ENCODE measurements at regions of chr6 and their contacts with region 1.

Region 1: GRCh38 chr6:116100419-116101301 is at the start of gene NT5DC1:
- DNase-seq: peak; percentile 83
- H3K4me3 Mint-ChIP-seq: peak within 1 kb of the TSS; percentile 89
- H3K27ac Mint-ChIP-seq: peak within 1 kb of the TSS; percentile 89
- H3K4me1 Mint-ChIP-seq: peaks cover 55% of the 10 kb centered on the region
- H3K27me3 Mint-ChIP-seq: no peaks in the 10 kb centered on the region
- total RNA-seq, gene NT5DC1: 44.1 and 50.4 TPM in 2 replicates

Region 2: GRCh38 chr6:115865914-115866313 is 234.7 kb before region 1 on chr6:
- intact Hi-C with region 1: no loop called
- DNase-seq: no peak
- H3K4me3 Mint-ChIP-seq: no peak overlapping the region
- H3K27ac Mint-ChIP-seq: no peak overlapping the region
- H3K4me1 Mint-ChIP-seq: no peaks in the 10 kb centered on the region
- H3K27me3 Mint-ChIP-seq: peaks cover 2% of the 10 kb centered on the region

Region 3: DNA sequence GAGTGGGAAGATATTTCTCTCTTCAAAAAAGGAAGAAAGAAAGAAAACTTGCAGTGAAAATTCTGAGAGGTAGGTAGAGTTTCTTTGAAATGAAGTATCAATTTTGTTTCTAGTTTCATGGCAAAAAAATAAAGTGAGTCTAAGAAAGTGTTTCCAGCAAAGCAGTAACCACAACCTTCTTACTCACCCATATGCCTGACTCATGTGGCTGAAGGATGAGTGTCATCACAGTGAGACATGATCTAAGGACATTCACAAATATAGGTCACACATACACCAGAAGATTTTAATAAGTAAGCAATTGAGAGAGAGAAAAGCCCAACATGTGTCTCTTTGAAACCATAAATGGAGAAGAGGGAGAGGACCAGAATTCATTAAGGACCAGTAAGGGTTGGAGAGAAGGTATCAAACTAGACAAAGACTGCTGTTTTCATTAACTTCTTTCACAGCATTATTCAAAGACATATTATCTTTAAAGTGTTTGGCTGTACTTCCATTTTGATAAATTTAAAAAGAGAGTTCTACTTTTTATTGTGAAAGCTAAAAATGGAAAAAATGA is 209.5 kb before region 1 on chr6:
- intact Hi-C with region 1: loop called (anchors 5 kb)
- DNase-seq: no peak
- H3K4me3 Mint-ChIP-seq: no peak overlapping the region
- H3K27ac Mint-ChIP-seq: peak overlapping the region; percentile 74
- H3K4me1 Mint-ChIP-seq: peaks cover 23% of the 10 kb centered on the region
- H3K27me3 Mint-ChIP-seq: peaks cover 2% of the 10 kb centered on the region

Region 4: GRCh38 chr6:116010790-116011401 is 89.8 kb before region 1 on chr6:
- intact Hi-C with region 1: loop called (anchors 1 kb)
- DNase-seq: peak; percentile 11
- H3K4me3 Mint-ChIP-seq: no peak overlapping the region
- H3K27ac Mint-ChIP-seq: no peak overlapping the region
- H3K4me1 Mint-ChIP-seq: peaks cover 8% of the 10 kb centered on the region
- H3K27me3 Mint-ChIP-seq: peaks cover 36% of the 10 kb centered on the region

Region 5: DNA sequence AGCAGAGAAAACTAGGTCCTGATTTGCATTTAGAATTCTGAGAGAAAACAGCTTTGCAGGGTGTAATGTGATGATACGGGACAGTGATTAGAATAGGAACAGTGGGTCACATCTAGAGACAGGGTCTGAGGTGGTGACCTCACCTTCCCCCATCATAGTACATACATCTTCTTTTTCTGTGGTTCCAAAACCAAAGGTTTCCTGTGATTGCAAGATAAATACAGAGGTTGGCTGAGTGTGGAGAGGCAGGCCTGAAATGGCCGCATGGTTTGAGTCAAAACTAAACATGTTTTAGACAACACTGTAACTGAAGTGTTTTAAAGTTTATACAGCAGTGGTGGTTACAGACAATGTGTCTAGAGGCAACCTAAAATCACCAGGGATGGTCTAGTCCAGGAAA is 10.4 kb before region 1 on chr6:
- intact Hi-C with region 1: loop called (anchors 1 kb)
- DNase-seq: peak; percentile 26
- H3K4me3 Mint-ChIP-seq: no peak overlapping the region
- H3K27ac Mint-ChIP-seq: peak overlapping the region; percentile 74
- H3K4me1 Mint-ChIP-seq: peaks cover 44% of the 10 kb centered on the region
- H3K27me3 Mint-ChIP-seq: peaks cover 2% of the 10 kb centered on the region

Region 6: DNA sequence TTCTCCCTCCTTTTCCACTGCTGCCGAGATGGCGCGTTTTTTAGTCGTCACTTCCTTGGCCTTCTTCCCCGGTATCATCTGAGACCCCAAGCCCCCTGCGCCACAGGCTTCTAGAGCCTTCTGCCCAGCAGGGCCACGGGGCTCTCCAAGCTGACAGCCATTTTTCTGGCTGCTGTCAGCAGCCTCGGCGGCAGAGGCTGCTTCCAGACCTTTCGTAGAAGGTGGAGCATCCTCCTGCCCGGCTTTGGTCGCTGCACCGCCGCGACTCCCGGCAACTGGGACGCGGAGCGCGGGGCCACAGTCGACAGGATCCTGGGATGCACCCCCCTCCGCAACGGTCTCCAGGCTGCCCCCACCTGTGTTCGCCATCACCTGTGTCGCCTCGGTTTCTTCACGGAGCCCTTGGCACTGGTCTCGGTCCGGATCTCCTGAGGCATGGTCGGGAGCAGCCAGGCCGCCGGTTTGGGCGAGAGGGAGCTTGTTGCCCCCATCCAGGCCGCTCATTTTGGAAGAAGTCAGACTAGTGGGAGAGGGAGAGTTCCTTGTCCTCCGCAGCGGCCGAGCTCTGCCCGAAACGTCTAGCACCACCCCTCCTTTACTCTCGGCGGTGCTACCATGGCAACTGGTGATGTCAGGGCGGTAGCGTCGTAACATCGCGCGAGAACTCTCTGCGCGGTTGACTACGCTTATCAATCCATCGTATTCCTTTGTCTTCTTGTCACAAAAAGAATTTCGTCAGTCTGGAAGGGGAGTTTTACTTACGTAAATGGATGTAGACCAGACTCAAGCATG is 153.0 kb after region 1 on chr6 and contains the start of gene TSPYL4:
- intact Hi-C with region 1: loop called (anchors 5 kb)
- DNase-seq: peak; percentile 89
- H3K4me3 Mint-ChIP-seq: no peak within 1 kb of the TSS
- H3K27ac Mint-ChIP-seq: no peak within 1 kb of the TSS
- H3K4me1 Mint-ChIP-seq: peaks cover 34% of the 10 kb centered on the region
- H3K27me3 Mint-ChIP-seq: no peaks in the 10 kb centered on the region
- total RNA-seq, gene TSPYL4: 17.5 and 18.0 TPM in 2 replicates